ENCODE measurements at regions of chr2 and their contacts with region 1.

Region 1: DNA sequence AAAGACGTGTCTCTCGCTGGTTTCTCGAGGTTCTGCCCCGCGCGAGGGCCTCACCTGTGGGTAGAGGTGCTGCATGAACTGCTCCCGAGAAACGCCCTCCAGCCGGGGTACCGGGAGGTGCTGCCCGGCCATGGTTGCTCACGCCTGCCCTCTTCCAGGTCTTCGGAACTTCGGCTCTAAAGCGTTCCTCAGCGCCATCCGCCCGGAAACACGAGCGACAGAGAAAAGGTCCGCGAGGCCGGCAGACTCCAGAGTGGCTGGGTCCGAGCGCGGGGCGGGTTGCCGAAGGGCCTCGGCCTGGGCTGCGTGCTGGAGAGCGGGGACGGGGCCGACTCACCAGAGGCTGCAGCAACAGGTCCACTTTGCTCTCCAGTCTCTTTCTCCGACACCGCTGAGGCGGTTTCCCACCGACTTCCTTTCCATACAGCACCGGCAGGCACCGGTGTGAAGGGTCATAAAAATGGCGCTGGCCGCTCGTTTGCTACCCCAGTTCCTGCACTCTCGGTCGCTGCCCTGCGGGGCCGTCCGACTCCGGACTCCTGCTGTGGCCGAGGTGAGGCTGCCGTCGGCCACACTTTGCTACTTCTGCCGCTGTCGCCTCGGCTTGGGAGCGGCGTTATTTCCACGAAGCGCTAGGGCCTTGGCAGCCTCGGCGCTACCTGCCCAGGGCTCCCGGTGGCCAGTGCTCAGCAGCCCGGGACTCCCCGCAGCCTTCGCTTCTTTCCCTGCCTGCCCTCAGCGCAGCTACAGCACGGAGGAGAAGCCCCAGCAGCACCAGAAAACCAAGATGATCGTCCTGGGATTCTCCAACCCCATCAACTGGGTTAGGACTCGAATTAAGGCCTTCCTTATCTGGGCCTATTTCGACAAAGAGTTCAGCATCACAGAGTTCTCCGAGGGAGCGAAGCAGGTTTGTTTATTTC is at the starts of genes MAIP1 and TYW5:
- DNase-seq: peak; percentile 83 to 90 (median 86)
- ATAC-seq: peak; percentile 93 to 97 (median 96)
- H3K4me3 ChIP-seq: peak within 1 kb of the TSS; percentile 63 to 99 (median 88)
- H3K27ac ChIP-seq: peak within 1 kb of the TSS; percentile 90 to 98 (median 92)
- H3K4me1 ChIP-seq: peaks cover 4 to 49% (median 25%) of the 10 kb centered on the region in 12 donors
- H3K27me3 ChIP-seq: no peaks in the 10 kb centered on the region
- CTCF ChIP-seq: peak in 7 of 12 donors; percentile 18 to 54 (median 30)
- POLR2A ChIP-seq: peak in 1 of 2 donors; percentile 49
- total RNA-seq, gene MAIP1: 18.1 to 38.5 (median 22.8) TPM
- total RNA-seq, gene TYW5: 1.4 to 4.1 (median 3.0) TPM

Region 2: GRCh38 chr2:199818026-199818425 is 137.6 kb before region 1 on chr2:
- intact Hi-C with region 1: no loop called
- DNase-seq: no peak
- ATAC-seq: no peak
- H3K4me3 ChIP-seq: no peak overlapping the region
- H3K27ac ChIP-seq: no peak overlapping the region
- H3K4me1 ChIP-seq: no peaks in the 10 kb centered on the region
- H3K27me3 ChIP-seq: no peaks in the 10 kb centered on the region
- CTCF ChIP-seq: no peak
- POLR2A ChIP-seq: no peak

Region 3: DNA sequence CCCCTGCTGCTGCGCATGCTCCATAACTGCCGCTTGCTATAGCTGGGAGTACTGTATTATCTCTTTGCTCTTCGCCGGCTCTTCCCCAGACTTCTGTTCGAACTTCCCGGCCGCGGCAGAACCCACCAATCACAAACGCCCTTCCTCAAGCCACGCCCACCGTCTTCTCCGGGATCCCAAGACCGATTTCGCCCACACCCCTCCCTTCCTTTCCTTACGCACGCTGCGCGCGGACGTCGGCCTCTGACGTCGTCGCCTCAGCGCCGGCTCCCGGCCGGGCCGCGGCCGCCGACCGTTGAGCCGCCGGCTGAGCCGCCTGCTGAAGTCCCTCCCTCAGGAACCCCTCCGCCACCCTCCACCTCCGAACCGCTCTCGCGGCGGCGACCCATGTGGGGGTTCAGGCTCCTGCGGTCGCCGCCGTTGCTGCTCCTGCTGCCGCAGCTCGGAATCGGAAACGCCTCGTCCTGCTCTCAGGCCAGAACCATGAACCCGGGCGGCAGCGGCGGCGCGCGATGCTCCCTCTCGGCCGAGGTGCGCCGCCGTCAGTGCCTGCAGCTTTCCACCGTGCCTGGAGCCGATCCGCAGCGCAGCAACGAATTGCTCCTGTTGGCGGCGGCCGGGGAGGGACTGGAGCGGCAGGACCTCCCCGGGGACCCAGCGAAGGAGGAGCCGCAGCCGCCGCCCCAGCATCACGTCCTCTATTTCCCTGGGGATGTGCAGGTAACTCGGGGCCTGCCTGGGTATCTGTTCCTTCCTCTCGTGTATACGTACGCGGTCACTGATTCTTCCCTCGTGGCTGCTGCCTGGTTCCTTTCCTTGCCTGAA is 44.3 kb before region 1 on chr2 and contains the start of gene C2orf69:
- intact Hi-C with region 1: loop called in 1 of 10 experiments (anchors 2 kb)
- DNase-seq: peak; percentile 96 to 97 (median 96)
- ATAC-seq: peak; percentile 98 to 99 (median 99)
- H3K4me3 ChIP-seq: peak within 1 kb of the TSS; percentile 59 to 99 (median 89)
- H3K27ac ChIP-seq: peak within 1 kb of the TSS; percentile 85 to 99 (median 96)
- H3K4me1 ChIP-seq: peaks cover 0 to 29% (median 22%) of the 10 kb centered on the region in 12 donors
- H3K27me3 ChIP-seq: no peaks in the 10 kb centered on the region
- CTCF ChIP-seq: peak in 1 of 12 donors; percentile 16
- POLR2A ChIP-seq: peak; percentile 46 to 86
- total RNA-seq, gene C2orf69: 7.2 to 10.6 (median 8.7) TPM

Region 4: GRCh38 chr2:199932312-199932855 is 23.2 kb before region 1 on chr2:
- intact Hi-C with region 1: no loop called
- DNase-seq: no peak
- ATAC-seq: no peak
- H3K4me3 ChIP-seq: no peak overlapping the region
- H3K27ac ChIP-seq: no peak overlapping the region
- H3K4me1 ChIP-seq: peaks cover 0 to 3% (median 0%) of the 10 kb centered on the region in 12 donors
- H3K27me3 ChIP-seq: no peaks in the 10 kb centered on the region
- CTCF ChIP-seq: no peak
- POLR2A ChIP-seq: no peak

Region 5: DNA sequence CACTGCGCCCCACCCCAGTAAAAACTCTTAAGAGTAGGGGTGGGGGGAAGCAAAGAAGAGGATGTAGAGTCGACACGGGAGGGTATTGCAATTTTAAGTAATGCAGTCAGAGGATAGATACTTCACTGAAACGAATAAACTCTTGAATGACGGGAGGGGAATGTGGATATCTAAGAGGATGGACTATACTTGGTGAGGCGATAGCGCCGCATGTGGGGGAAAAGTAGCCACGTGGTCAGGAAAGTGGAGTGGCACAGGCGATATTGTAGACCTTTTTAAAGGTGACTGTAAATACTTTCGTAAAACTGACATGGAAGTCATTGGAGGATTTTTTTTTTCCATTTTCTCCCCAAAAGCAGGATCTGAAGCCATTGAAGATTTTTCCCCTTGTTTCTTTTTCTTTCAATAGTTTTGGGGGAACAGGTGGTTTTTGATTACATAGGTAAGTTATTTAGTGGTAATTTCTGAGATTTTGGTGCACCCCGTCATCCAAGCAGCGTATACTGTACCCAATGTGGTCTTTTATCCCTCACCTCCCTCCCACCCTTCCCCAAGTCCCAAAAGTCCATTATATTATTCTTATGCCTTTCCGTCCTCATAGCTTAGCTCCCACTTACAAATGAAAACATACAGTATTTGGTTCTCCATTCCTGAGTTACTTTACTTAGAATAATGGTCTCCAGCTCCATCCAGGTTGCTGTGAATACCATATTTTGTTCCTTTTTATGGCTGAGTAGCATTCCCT is 895.1 kb after region 1 on chr2:
- intact Hi-C with region 1: loop called in 1 of 10 experiments (anchors 10 kb)
- DNase-seq: no peak
- ATAC-seq: peak; percentile 35 to 55 (median 40)
- H3K4me3 ChIP-seq: no peak overlapping the region
- H3K27ac ChIP-seq: no peak overlapping the region
- H3K4me1 ChIP-seq: peaks cover 0 to 3% (median 0%) of the 10 kb centered on the region in 12 donors
- H3K27me3 ChIP-seq: no peaks in the 10 kb centered on the region
- CTCF ChIP-seq: no peak
- POLR2A ChIP-seq: no peak

Measured in heart left ventricle (tissue), 16 donors.